ENCODE measurements at regions of chr12 and their contacts with region 1.

Region 1: DNA sequence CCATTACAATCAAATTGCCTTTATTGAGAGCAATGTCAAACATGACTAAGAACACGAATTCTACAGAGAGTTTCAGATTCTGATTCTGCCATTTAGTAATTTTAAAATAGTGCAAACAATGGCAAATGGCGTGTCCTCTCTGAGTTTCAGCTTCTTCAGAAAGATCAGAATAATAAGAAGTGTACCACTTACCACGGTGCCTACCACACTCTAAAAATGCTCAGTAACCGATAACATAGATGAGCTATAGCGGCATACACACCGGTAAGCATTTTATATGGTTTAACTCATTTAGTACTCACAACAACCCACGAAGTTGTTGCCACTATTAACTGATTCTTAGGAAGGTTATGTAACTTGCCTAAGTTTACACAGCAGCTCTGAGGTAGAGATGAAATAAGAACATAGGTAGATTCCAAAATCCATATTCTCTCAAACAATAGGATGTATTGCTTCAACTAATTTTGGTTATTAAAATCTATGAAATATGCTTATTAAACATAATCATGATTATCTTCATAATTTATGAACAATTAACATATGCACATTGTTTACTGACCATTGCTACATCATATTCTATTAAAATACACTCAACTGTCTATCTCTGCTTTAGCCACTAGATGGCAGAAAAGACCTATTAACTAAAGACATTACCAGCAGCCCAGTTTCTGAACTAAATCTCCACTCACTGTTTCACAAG is 38.3 kb downstream of the SLC6A15 start:
- DNase-seq: peak; percentile 77
- H3K4me3 ChIP-seq: no peak overlapping the region
- H3K27ac ChIP-seq: no peak overlapping the region
- H3K4me1 ChIP-seq: no peaks in the 10 kb centered on the region
- H3K27me3 ChIP-seq: no peaks in the 10 kb centered on the region

Region 2: GRCh38 chr12:83462419-83462818 is 1411.9 kb before region 1 on chr12:
- in situ Hi-C with region 1: no loop called
- DNase-seq: no peak
- H3K4me3 ChIP-seq: no peak overlapping the region
- H3K27ac ChIP-seq: no peak overlapping the region
- H3K4me1 ChIP-seq: no peaks in the 10 kb centered on the region
- H3K27me3 ChIP-seq: no peaks in the 10 kb centered on the region

Region 3: DNA sequence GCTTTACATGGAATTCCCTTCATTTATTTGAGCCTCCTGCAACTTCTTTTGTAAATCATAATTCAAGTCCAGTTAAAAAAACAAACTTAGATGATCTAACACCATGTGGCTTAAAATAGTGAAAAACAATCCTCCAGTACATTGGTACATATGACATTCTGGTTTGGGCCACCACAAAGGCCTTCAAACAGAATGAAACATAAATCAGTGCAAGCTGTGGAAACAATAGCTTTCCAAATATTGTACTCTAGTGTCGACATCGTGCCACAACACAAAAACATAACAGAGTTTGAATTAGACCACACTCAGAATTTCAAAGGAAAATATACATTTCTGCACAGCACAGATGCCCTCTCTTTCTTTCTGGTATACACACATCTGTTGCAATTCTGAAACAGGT is 713.0 kb before region 1 on chr12:
- in situ Hi-C with region 1: no loop called
- DNase-seq: no peak
- H3K4me3 ChIP-seq: no peak overlapping the region
- H3K27ac ChIP-seq: no peak overlapping the region
- H3K4me1 ChIP-seq: no peaks in the 10 kb centered on the region
- H3K27me3 ChIP-seq: no peaks in the 10 kb centered on the region

Region 4: DNA sequence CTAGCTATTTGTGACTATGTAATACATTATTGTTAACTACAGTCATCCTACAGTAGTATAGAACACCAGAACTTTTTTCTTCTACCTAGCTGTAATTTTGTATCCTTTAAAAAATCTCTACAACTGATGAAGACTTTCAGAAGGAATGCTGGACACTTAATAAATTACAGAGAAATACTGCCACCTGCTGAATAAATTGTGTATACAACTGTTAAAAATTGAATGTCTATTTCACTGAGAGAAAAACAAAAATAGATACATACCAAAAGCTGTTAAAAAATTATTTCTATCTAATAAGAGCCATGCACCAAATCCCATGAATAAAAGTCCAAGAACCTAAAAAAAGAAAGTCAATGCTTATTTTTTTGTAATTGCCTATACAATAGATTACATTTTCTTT is 155.2 kb after region 1 on chr12:
- in situ Hi-C with region 1: loop called (anchors 5 kb)
- DNase-seq: peak; percentile 72
- H3K4me3 ChIP-seq: no peak overlapping the region
- H3K27ac ChIP-seq: no peak overlapping the region
- H3K4me1 ChIP-seq: no peaks in the 10 kb centered on the region
- H3K27me3 ChIP-seq: no peaks in the 10 kb centered on the region; the same call in 1 of the 2 replicates

Region 5: GRCh38 chr12:85041395-85041794 is 167.1 kb after region 1 on chr12:
- in situ Hi-C with region 1: no loop called
- DNase-seq: no peak
- H3K4me3 ChIP-seq: no peak overlapping the region
- H3K27ac ChIP-seq: no peak overlapping the region
- H3K4me1 ChIP-seq: no peaks in the 10 kb centered on the region
- H3K27me3 ChIP-seq: no peaks in the 10 kb centered on the region